ENCODE measurements at regions of chr22 and their contacts with region 1.

Region 1: DNA sequence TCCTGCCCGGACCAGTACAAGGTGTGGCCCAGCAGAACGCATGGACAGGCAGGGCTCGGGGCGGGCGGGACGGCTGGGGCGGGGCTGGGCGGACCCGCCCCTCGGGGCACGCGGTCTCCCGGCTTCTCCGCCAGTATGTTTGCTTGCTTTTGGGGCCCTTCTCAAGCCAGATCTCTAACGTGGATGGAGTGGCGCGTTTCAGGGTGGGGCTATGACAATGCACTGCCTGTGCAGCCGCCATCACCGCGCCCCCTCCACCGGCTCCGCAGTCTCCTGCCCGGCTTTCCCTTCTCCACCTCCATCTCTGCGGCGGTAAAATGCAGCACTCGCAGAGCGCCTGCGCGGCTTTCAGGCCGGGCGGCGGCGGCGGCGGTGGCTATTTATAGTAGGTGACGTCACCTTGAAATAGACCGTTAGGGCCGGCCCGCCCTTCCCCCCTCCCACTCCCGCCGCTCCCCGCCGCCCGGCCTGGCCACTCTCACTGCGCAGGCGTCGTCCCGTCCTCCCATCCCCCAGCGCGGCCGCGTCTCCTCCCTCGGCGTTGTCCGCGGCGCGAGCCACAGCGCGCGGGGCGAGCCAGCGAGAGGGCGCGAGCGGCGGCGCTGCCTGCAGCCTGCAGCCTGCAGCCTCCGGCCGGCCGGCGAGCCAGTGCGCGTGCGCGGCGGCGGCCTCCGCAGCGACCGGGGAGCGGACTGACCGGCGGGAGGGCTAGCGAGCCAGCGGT is at the start of gene YWHAH:
- DNase-seq: peak; percentile 91
- ATAC-seq: peak; percentile 78
- H3K4me3 Mint-ChIP-seq: peak within 1 kb of the TSS; percentile 91
- H3K27ac Mint-ChIP-seq: peak within 1 kb of the TSS; percentile 91
- H3K4me1 Mint-ChIP-seq: peaks cover 16% of the 10 kb centered on the region
- H3K27me3 Mint-ChIP-seq: no peaks in the 10 kb centered on the region
- CTCF ChIP-seq: no peak
- total RNA-seq, gene YWHAH: 44.3 and 48.9 TPM in 2 replicates

Region 2: DNA sequence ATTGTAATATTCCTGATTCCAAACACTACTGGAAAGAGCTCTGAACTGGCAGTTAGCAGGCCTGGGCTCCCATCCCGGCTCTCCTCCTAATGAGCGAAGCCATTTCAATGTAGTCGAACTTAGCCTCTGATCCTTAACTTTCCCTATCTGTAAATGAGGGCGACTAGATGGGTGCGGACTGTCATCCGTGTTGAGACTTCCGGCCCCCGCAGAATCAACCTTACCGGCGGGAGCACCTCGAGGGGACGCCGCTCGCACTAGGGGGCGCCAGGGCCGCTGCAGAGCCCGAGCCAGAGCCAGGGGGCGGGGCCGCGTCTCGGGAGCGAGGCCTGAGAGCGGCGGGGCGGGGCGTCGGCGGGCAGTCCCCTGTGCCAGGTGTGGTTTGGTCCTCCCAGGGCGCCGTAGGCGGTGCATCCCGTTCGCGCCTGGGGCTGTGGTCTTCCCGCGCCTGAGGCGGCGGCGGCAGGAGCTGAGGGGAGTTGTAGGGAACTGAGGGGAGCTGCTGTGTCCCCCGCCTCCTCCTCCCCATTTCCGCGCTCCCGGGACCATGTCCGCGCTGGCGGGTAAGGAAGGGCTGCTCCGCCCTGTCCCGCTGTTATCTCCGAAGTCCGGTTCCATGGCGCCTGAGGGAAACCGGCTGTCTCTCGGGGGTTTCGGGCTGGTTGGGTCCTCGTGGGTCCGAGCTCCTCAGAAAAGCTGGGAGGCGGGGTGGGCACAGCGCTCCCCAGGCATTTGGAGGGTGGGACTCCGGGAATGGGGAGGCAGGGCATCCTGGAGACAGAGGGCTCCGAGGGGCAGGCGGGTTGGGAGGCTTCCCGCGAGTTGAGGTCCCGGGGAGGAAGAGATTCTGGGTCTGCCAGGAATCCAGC is 732.0 kb before region 1 on chr22 and contains the start of gene LIMK2:
- CTCF ChIA-PET with region 1: no interaction called
- POLR2A ChIA-PET with region 1: no interaction called
- intact Hi-C with region 1: loop called (anchors 10 kb)
- DNase-seq: peak; percentile 98
- ATAC-seq: peak; percentile 100
- H3K4me3 Mint-ChIP-seq: peak within 1 kb of the TSS; percentile 90
- H3K27ac Mint-ChIP-seq: peak within 1 kb of the TSS; percentile 79
- H3K4me1 Mint-ChIP-seq: peaks cover 26% of the 10 kb centered on the region
- H3K27me3 Mint-ChIP-seq: no peaks in the 10 kb centered on the region
- CTCF ChIP-seq: peak; percentile 30
- total RNA-seq, gene LIMK2: 15.3 and 17.7 TPM in 2 replicates

Region 3: DNA sequence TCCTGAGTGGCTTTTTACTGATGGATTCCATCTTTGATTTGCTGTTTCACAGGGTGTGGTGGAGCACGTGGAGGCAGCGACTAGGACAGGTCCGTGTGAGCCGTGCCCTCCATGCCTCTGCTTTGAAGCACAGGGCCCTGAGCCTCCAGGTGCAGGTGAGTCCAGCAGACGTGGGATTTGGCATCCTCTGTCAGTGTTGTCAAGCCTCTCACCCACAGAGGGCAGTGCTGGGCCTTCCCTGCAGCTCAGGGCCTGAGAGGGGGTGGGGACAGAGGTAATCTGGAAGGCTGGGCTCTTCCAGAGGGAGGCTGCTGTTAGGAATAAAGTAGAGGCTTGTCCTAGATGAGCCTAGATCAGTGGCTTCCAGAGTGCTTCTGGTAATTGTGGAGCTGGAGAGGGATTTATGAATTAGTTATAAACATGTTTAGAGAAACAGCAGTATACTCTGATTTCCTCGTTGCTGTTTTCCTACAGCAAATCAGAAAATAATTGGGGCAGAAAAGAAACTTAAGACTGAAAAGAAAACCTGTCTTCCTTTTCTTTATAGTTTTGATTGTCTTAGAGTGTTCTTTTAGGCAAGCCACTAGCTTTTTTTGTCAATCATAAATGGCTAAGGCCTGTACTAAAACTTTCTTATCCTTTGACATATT is 382.8 kb before region 1 on chr22:
- CTCF ChIA-PET with region 1: no interaction called
- POLR2A ChIA-PET with region 1: no interaction called
- intact Hi-C with region 1: loop called (anchors 1 kb)
- DNase-seq: peak; percentile 28
- ATAC-seq: peak; percentile 91
- H3K4me3 Mint-ChIP-seq: no peak overlapping the region
- H3K27ac Mint-ChIP-seq: no peak overlapping the region
- H3K4me1 Mint-ChIP-seq: no peaks in the 10 kb centered on the region
- H3K27me3 Mint-ChIP-seq: no peaks in the 10 kb centered on the region
- CTCF ChIP-seq: no peak

Region 4: DNA sequence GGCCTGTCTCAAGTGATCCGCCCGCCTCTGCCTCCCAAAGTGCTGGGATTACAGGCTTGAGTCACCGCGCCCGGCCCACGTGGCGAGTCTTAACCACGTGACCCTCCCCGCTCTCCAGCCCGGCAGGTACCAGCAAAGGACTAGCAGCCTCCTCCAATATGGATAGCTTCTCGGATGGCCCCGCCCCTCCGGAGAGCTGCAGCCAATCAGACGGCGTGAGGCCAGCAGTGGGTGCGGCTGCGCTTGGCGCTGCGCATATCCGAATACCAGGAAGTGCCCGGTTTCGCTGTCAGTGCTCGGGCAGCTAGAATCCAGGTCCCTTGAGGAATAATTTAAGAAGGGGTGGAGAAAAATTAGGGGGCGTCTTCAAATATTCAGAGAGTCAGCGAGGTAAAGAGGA is 267.4 kb before region 1 on chr22:
- CTCF ChIA-PET with region 1: interaction called, 9 read pairs
- POLR2A ChIA-PET with region 1: interaction called, 3 read pairs
- intact Hi-C with region 1: loop called (anchors 2 kb)
- DNase-seq: peak; percentile 84
- ATAC-seq: peak; percentile 99
- H3K4me3 Mint-ChIP-seq: peak overlapping the region; percentile 96
- H3K27ac Mint-ChIP-seq: peak overlapping the region; percentile 94
- H3K4me1 Mint-ChIP-seq: peaks cover 25% of the 10 kb centered on the region
- H3K27me3 Mint-ChIP-seq: no peaks in the 10 kb centered on the region
- CTCF ChIP-seq: no peak

Region 5: GRCh38 chr22:31841078-31841827 is 102.9 kb before region 1 on chr22:
- CTCF ChIA-PET with region 1: interaction called, 4 read pairs
- POLR2A ChIA-PET with region 1: no interaction called
- intact Hi-C with region 1: loop called (anchors 5 kb)
- DNase-seq: no peak
- ATAC-seq: peak; percentile 50
- H3K4me3 Mint-ChIP-seq: peak overlapping the region; percentile 51
- H3K27ac Mint-ChIP-seq: peak overlapping the region; percentile 54
- H3K4me1 Mint-ChIP-seq: peaks cover 14% of the 10 kb centered on the region
- H3K27me3 Mint-ChIP-seq: no peaks in the 10 kb centered on the region
- CTCF ChIP-seq: no peak

Region 6: DNA sequence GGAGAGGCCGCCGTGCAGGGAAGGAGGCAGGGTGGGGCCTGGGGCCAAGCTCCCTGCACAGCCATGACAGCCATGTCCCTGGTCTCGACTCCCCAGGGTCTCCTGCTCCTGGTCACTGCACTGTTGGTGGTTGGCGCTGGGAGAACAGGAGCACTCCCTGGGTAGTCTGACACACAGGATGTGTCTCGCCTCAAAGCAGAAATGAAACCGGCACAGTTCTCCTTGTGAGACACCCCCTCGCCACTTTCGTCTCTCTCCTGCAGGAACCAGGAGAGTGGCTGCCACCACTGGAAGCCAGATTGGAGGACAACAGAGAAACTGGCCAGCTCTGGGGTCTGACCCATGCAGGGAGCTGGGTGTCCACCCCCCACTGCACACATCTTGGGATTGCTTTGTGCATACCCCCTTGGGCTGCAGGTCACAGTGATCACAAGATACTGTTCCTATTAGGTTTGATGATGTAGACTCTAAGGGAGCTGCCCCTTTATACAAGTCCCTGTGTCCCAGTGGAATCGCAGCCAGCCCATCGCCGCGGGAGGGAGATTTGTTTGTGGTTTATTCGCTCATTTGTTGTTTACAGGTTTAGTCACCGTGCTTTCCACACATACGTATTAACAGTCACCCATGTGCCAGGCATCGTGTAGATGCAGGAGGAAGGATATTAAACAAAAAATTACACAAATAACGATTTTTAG is 26.8 kb before region 1 on chr22:
- CTCF ChIA-PET with region 1: no interaction called
- POLR2A ChIA-PET with region 1: no interaction called
- intact Hi-C with region 1: loop called (anchors 1 kb)
- DNase-seq: peak; percentile 34
- ATAC-seq: peak; percentile 79
- H3K4me3 Mint-ChIP-seq: peak overlapping the region; percentile 44
- H3K27ac Mint-ChIP-seq: peak overlapping the region; percentile 30
- H3K4me1 Mint-ChIP-seq: peaks cover 23% of the 10 kb centered on the region
- H3K27me3 Mint-ChIP-seq: no peaks in the 10 kb centered on the region
- CTCF ChIP-seq: no peak